Cardiac septum (tissue), 1 donor: ENCODE measurements at regions of chr22 and their contacts with region 1.

Region 1: GRCh38 chr22:36781656-36782627 is 6.0 kb upstream of the IFT27 start:
- DNase-seq: peak; percentile 92

Region 2: GRCh38 chr22:36644333-36644757 is 137.6 kb before region 1 on chr22:
- intact Hi-C with region 1: no loop called
- DNase-seq: no peak

Region 3: GRCh38 chr22:36856121-36856791 is 74.3 kb after region 1 on chr22:
- intact Hi-C with region 1: loop called (anchors 2 kb)
- DNase-seq: peak; percentile 97

Region 4: DNA sequence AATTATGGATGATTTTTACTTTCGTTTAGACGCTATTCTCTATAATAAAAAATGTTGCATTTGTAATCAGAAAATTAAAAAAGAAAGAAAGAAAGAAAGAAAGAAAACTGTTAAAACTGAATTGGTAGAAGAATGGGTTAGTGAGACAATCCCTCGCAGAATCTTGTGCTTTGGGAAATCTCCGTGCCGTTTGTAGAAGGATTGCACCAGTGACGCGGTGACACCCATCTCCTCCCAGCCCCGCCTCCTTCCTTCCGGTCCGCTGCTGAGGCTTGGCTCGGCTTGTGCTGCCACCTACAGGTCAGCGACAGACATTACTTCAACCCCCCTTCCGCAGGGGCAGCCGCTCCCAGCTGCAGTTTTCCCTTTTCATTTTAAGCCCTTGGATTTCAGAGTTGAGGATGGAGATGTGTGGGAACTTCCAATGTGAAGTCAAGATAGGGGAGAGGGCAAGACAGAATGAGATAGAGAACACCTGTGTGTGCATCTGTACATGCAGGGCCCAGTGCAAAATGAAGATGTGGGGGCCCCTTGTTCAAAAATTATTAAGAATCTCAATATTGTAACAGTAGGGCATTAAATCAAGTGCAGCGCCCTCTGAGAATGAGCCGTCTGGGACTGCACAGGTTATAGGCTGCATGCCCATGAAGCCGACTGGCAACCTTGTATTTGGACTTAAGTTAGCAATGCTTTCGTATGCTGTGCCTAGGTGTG is 196.2 kb after region 1 on chr22:
- intact Hi-C with region 1: loop called (anchors 2 kb)
- DNase-seq: peak; percentile 97

Region 5: GRCh38 chr22:37043828-37044538 is 262.0 kb after region 1 on chr22:
- intact Hi-C with region 1: loop called (anchors 5 kb)
- DNase-seq: peak; percentile 82

Region 6: DNA sequence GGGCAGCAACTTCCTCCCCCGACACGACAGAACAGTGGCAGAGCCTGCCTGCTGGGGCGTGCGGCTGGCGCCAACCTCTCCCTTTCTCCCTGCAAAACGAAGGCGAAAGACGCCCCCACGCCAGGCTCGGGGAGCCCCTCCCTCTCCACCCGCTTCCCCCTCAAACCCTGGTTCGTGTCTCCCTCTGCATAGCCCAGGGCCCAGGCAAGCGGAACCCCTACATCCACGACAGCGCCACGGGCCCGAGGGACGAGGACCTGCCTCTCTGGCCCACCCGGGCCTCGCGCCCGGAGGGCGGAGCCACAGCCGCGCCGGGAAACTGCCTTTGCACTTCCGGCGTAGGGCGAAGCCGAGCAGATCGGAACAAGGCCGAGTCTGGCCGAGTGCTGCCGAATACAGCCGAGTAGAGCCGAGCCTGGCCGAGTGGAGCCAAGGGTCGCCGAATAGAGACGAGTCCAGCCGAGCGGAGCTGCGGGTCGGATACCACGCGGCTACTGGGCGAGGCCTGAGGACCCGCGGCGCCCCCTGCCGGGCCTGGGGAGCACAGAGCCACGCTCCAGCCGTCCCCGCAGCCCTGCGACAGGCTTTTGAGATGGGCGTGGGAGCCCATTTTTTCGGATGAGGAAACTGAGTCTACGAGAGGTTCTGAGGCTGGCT is 417.3 kb after region 1 on chr22:
- intact Hi-C with region 1: loop called (anchors 5 kb)
- DNase-seq: peak; percentile 99